Caco-2 (cell line): ENCODE measurements at regions of chr1 and their contacts with region 1.

Region 1: GRCh38 chr1:241219449-241219848 is 137.6 kb downstream of the RGS7 start:
- DNase-seq: peak; percentile 52 to 79
- H3K4me3 ChIP-seq: no peak overlapping the region
- H3K4me3 Mint-ChIP-seq: peak overlapping the region; percentile 59
- H3K27ac Mint-ChIP-seq: peak overlapping the region; percentile 98
- H3K4me1 ChIP-seq: peaks cover 35% of the 10 kb centered on the region
- H3K4me1 Mint-ChIP-seq: peaks cover 33% of the 10 kb centered on the region
- H3K27me3 ChIP-seq: no peaks in the 10 kb centered on the region
- H3K27me3 Mint-ChIP-seq: no peaks in the 10 kb centered on the region
- CTCF ChIP-seq: no peak

Region 2: DNA sequence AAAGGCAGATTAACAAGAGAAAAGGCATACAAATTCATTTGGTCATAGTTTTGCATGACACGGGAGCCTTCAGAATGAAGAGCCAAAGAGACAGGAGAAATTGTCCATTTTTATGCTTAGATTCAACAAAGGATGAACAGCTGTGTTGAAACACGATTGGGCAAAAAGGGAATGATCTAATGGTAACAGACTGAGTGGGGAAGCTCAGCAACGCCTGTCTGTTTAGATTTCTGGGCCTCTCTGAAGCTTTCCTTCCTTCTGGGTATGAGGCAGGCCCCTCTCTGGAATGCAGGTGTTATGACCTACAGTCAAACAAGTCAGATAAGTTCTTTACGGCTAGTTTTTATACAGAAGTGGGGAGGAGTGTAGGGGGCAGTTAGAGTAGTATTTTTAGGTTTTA is 17.0 kb before region 1 on chr1:
- CTCF ChIA-PET with region 1: no interaction called
- POLR2A ChIA-PET with region 1: interaction called, 4 read pairs
- intact Hi-C with region 1: loop called (anchors 1 kb)
- DNase-seq: peak; percentile 82 to 88
- H3K4me3 ChIP-seq: no peak overlapping the region
- H3K4me3 Mint-ChIP-seq: peak overlapping the region; percentile 32
- H3K27ac Mint-ChIP-seq: peak overlapping the region; percentile 90
- H3K4me1 ChIP-seq: peaks cover 31% of the 10 kb centered on the region
- H3K4me1 Mint-ChIP-seq: peaks cover 52% of the 10 kb centered on the region
- H3K27me3 ChIP-seq: no peaks in the 10 kb centered on the region
- H3K27me3 Mint-ChIP-seq: no peaks in the 10 kb centered on the region
- CTCF ChIP-seq: no peak